Naive thymus-derived CD8-positive, alpha-beta T cell (primary cell): ENCODE measurements at regions of chr12 and their contacts with region 1.

Region 1: GRCh38 chr12:56189176-56189917 is at the start of gene SMARCC2:
- DNase-seq: peak; percentile 74 to 91 (median 82)
- ATAC-seq: peak; percentile 82 to 84
- H3K4me3 Mint-ChIP-seq: peak within 1 kb of the TSS; percentile 89 to 99 (median 96)
- H3K27ac Mint-ChIP-seq: peak within 1 kb of the TSS; percentile 97 to 100 (median 98)
- H3K4me1 Mint-ChIP-seq: peaks cover 39 to 51% (median 43%) of the 10 kb centered on the region in 4 donors
- H3K27me3 Mint-ChIP-seq: peaks cover 0 to 3% (median 0%) of the 10 kb centered on the region in 5 donors
- polyA plus RNA-seq, gene SMARCC2: 46.3 to 70.4 (median 54.1) TPM

Region 2: DNA sequence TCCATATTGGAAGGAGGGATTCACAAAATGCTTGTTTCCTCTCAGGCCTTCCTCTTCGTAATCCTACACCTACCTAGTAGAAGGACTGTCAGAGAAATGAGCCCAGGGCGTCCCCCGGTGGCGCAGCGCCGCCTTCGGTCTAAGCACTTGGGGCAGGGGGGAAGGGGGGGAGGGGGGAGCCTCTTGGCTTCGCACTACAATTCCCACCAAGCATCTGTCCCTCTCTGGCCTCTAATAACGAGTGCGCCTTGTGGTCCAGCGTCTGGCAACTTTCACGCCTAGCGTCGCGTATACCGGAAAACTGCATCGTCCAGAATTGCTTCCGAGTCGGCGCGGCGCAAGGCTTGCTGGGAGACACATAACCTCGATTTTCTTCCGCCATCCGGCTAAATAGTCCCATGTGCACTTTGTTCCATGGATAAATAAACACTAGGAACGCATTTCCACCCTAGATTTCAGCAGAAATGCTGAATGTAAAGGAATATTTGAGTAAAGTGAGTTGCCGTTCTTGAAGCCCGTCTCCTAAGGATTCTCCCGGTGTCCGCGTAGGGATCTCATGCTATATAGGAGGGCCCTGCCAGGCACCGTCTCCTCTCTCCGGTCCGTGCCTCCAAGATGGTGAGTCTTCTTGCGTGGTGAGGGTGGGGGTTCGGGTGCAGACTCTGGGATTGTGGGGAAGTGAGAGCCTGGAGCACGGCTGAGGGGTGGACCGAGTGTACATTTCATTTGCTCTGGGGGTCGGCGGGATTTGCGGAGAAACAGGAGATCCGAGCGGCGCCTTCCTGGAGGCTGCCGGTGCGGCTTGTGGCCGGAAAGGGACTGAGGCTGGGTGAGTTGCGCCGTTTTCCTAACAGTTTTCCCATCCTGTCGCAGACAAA is 147.6 kb before region 1 on chr12 and contains the start of gene RPS26:
- POLR2A ChIA-PET with region 1: interaction called, 15 read pairs
- DNase-seq: peak; percentile 81 to 98 (median 90)
- ATAC-seq: peak; percentile 89
- H3K4me3 Mint-ChIP-seq: peak within 1 kb of the TSS; percentile 90 to 100 (median 99)
- H3K27ac Mint-ChIP-seq: peak within 1 kb of the TSS; percentile 95 to 100 (median 99)
- H3K4me1 Mint-ChIP-seq: peaks cover 13 to 37% (median 32%) of the 10 kb centered on the region in 4 donors
- H3K27me3 Mint-ChIP-seq: no peaks in the 10 kb centered on the region
- polyA plus RNA-seq, gene RPS26: 743 to 1,060 (median 810) TPM

Region 3: DNA sequence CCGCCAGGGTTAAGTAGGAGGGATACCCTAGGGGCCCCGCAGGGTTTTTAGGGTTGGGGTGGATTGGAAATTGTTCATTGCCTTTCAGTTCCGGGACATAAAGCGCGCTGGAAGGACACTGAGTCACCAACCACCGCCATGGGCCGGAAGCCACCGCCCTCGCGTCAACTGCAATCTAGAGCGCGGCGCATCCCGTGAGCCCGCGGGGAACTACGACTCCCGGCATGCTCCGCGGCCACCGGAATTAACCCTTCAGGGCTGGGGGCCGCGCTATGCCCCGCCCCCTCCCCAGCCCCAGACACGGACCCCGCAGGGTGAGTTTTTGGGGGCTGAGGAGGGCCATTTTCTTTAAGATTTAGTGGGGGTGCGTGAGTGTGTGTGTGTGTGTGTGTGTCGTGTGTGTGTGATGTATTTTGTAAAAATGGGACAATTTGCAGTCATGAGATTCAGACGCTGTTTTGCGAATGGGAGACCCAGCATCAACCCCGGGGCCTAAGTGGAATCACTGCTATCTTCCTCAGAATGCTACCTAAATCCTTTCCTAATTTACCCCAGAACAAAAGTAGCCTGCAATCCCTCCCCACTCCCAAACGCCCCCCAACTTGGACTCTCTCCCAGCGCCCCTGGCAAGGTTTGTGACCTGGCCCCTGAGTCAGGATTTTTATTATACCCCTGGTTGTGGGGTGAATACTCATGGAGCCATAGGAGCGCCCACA is 36.9 kb before region 1 on chr12 and contains the start of gene MYL6B:
- POLR2A ChIA-PET with region 1: interaction called, 55 read pairs
- DNase-seq: peak; percentile 85 to 94 (median 87)
- ATAC-seq: peak; percentile 89 to 91
- H3K4me3 Mint-ChIP-seq: peak within 1 kb of the TSS; percentile 81 to 95 (median 92)
- H3K27ac Mint-ChIP-seq: peak within 1 kb of the TSS; percentile 93 to 99 (median 98)
- H3K4me1 Mint-ChIP-seq: peaks cover 17 to 47% (median 40%) of the 10 kb centered on the region in 4 donors
- H3K27me3 Mint-ChIP-seq: no peaks in the 10 kb centered on the region
- polyA plus RNA-seq, gene MYL6B: 3.4 to 4.0 (median 3.8) TPM

Region 4: DNA sequence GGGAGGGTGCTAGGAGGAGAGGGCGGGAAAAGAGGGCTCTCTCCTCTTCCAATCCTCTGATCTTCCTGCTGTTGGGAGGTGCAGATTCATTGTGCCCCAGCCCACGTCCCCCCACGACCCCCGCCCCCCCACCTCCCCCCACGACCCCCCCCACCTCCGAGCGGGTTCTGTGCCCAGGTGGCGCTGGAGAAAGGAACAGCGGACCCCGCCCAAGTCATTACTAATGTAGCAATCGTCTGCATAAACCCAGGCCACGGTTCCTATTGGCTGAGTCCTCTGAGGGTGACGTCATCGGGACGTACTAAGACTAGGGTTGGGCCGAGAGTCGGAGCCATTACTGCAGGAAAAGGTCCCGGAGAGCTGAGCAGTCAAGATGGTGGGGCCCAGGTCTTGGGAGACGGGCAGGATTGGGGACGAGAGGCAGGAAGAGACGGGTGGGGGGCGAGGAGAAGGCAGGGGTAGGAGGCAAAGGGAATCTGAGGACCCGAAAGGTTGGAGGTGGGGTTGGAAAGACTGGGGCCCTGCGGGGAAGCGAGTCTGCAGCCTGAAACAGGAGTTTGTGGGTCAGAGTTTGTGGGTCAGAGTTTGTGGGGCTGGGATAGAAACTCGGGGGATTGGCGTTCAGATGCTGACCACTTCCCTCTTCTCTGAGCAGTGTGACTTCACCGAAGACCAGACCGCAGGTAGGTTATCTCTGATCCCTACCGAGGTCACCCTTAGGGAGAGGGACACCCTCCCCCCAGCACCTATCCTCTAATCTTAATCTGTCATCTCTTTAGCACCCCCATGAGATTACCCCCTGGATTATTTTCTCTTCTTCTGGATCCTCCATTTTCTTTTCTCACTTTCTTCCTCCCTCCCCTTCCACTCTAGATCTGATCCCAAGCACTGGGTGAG is 31.1 kb before region 1 on chr12 and contains the start of gene MYL6:
- POLR2A ChIA-PET with region 1: interaction called, 55 read pairs
- DNase-seq: peak; percentile 72 to 97 (median 90)
- ATAC-seq: peak; percentile 85 to 87
- H3K4me3 Mint-ChIP-seq: peak within 1 kb of the TSS; percentile 93 to 99 (median 98)
- H3K27ac Mint-ChIP-seq: peak within 1 kb of the TSS; percentile 95 to 100 (median 98)
- H3K4me1 Mint-ChIP-seq: peaks cover 32 to 54% (median 49%) of the 10 kb centered on the region in 4 donors
- H3K27me3 Mint-ChIP-seq: no peaks in the 10 kb centered on the region
- polyA plus RNA-seq, gene MYL6: 1,813 to 2,533 (median 2,044) TPM

Region 5: DNA sequence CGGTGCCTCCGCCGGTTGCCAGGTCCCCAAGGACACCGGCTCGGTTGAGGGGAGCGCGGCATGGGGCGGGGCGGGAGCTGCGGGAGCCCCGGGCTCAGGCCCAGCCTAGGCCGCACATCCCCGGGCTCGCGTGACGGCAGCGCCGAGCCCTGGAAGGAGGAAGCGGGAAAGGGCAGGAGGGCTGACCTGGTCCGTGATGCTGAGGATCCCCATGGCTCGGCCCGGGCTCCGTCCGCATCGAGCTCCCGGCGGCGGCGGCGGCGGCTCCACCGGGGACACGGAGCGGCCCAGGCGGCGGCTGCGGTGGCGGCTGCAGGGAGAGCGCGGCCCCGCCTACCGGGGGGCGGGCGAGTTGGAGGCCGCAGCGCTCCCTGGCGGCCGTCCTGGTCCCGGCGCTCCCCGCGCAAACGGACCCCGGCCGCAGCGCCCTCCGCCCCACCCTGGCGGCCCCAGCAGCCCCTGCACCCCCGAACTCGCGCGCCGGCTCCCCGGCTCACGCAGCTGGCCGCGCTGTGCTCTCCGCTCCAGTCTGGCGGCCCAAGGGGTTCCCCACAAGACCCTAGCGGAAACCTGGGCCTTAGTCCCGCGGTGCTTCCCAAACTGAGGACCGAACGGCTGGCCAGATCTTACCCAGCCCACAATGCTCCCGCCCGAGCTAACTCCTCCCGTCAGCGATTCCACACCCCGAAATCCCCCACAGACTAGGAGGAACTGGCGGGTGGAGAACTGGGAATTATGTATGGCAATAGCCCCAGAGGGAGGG is 68.9 kb after region 1 on chr12 and contains the start of gene ANKRD52:
- POLR2A ChIA-PET with region 1: interaction called, 20 read pairs
- DNase-seq: peak; percentile 64 to 88 (median 81)
- ATAC-seq: peak; percentile 94
- H3K4me3 Mint-ChIP-seq: peak within 1 kb of the TSS; percentile 87 to 94 (median 92)
- H3K27ac Mint-ChIP-seq: peak within 1 kb of the TSS; percentile 83 to 96 (median 92)
- H3K4me1 Mint-ChIP-seq: peaks cover 21 to 28% (median 25%) of the 10 kb centered on the region in 4 donors
- H3K27me3 Mint-ChIP-seq: no peaks in the 10 kb centered on the region
- polyA plus RNA-seq, gene ANKRD52: 7.5 to 11.5 (median 7.9) TPM

Region 6: DNA sequence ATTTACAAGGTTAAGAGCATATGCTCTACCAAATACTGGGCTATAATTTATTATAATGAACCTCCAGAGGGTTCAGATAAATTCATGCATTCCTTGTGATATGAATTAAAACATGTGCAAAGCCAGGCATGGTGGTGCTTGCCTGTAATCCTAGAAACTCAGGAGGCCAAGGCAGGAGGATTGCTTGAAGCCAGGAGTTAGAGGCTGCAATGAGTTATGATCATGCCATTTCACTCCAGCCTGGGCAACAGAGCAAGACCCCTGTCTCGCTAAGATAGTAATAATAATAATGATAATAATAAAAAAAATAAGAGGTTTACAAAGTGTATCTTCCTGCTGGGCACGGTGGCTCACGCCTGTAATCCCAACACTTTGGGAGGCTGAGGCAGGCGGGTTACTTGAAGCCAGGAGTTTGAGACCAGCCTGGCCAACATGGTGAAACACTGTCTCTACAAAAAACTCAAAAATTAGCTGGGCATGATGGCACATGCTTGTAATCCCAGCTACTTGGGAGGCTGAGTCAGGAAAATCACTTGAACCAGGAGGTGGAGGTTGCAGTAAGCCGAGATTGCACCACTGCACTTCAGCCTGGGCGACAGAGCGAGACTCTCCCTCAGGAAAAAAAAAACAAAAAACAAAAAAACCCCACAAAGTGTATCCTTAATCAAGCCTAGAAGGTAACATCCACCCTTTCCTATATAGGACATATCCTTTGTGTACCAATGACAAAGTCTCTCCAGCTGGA is 118.0 kb after region 1 on chr12:
- POLR2A ChIA-PET with region 1: no interaction called
- DNase-seq: no peak
- ATAC-seq: no peak
- H3K4me3 Mint-ChIP-seq: no peak overlapping the region
- H3K27ac Mint-ChIP-seq: no peak overlapping the region
- H3K4me1 Mint-ChIP-seq: peaks cover under 1 to 5% (median 2%) of the 10 kb centered on the region in 4 donors
- H3K27me3 Mint-ChIP-seq: no peaks in the 10 kb centered on the region